Activated CD8-positive, alpha-beta T cell treated with anti-CD3 and anti-CD28 coated beads for 36 hours (primary cell): ENCODE measurements at regions of chr22 and their contacts with region 1.

Region 1: GRCh38 chr22:37428649-37429586 is 1.6 kb upstream of the ELFN2 start:
- DNase-seq: peak; percentile 75
- ATAC-seq: no peak
- H3K4me3 Mint-ChIP-seq: no peak overlapping the region
- H3K27ac Mint-ChIP-seq: no peak overlapping the region
- H3K4me1 Mint-ChIP-seq: peaks cover 23% of the 10 kb centered on the region
- H3K27me3 Mint-ChIP-seq: peaks cover 53% of the 10 kb centered on the region
- CTCF ChIP-seq: peak; percentile 88

Region 2: DNA sequence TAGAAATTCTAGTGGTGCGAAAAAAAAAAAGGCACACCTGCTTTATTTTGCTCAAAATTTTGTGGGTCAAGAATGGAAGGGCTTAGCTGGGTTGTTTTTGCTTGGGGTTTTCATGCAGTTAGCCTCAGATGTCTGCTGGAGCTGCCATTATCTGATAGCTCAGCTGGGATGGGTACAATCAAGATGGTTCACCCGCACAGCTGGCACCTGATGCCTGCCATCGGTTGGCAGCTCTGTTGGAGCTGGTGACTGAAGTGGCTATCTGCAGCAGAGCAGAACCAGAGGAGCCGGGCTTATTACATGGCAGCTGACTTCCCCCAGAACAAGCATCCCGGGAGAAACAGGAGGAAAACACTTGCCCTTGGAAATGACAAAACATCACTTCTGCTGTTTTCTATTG is 10.4 kb after region 1 on chr22:
- CTCF ChIA-PET with region 1: interaction called, 20 read pairs
- POLR2A ChIA-PET with region 1: interaction called, 3 read pairs
- intact Hi-C with region 1: no loop called
- DNase-seq: no peak
- ATAC-seq: no peak
- H3K4me3 Mint-ChIP-seq: no peak overlapping the region
- H3K27ac Mint-ChIP-seq: no peak overlapping the region
- H3K4me1 Mint-ChIP-seq: peaks cover 6% of the 10 kb centered on the region
- H3K27me3 Mint-ChIP-seq: peaks cover 2% of the 10 kb centered on the region
- CTCF ChIP-seq: no peak